PC-9 (cell line): ENCODE measurements at regions of chr2 and their contacts with region 1.

Region 1: GRCh38 chr2:172465417-172466334 is 38.3 kb downstream of the ITGA6 start:
- DNase-seq: peak; percentile 78 to 91
- H3K4me3 ChIP-seq: no peak overlapping the region
- H3K27ac ChIP-seq: peak overlapping the region; percentile 61
- H3K4me1 ChIP-seq: peaks cover 49% of the 10 kb centered on the region
- H3K27me3 ChIP-seq: no peaks in the 10 kb centered on the region
- CTCF ChIP-seq: peak; percentile 100

Region 2: DNA sequence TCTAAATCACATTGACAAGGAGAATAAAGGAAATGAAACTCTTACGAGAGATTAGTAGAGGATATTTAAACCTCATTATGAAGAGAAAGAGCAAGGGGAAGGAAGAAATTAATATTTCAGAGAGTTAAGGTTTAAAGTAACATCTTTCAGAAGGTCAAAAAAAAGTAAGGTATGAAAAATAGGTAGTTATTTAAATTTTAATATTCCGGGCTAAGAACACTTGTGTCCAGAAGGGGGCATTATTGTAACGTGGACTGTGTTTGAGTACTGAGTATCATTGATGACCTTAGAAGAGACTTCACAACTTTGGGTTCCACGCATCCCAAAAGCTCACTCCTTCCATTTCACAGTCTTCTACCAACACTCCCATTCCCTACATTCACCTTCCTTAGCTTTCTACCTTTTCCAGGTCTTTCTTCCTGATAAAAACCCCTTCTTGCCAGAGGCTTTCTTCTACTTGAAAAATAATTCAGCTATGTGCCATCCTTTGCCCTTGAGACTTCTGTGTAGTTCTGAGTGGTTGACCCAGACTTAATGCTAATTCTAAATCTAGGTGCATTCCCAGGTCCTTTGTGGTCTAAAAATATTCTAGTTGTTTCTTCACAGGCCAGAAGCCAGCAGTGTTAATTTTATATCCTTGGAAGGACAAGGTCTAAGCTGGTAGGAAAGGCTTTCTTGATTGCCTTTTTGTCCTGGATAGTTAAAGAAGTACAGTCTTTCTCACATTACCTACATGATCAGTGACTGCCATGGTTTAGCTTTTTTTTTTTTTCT is 761.9 kb before region 1 on chr2:
- CTCF ChIA-PET with region 1: interaction called, 9 read pairs
- POLR2A ChIA-PET with region 1: no interaction called
- intact Hi-C with region 1: loop called (anchors 1 kb)
- DNase-seq: peak; percentile 10 to 59
- H3K4me3 ChIP-seq: no peak overlapping the region
- H3K27ac ChIP-seq: peak overlapping the region; percentile 18; the same call in 1 of the 2 replicates
- H3K4me1 ChIP-seq: no peaks in the 10 kb centered on the region
- H3K27me3 ChIP-seq: no peaks in the 10 kb centered on the region
- CTCF ChIP-seq: peak; percentile 85

Region 3: GRCh38 chr2:171999604-172000469 is 465.8 kb before region 1 on chr2 and contains the start of gene METAP1D:
- CTCF ChIA-PET with region 1: no interaction called
- POLR2A ChIA-PET with region 1: no interaction called
- intact Hi-C with region 1: loop called (anchors 1 kb)
- DNase-seq: peak; percentile 91 to 100
- H3K4me3 ChIP-seq: peak within 1 kb of the TSS; percentile 65
- H3K27ac ChIP-seq: peak within 1 kb of the TSS; percentile 77
- H3K4me1 ChIP-seq: peaks cover 17% of the 10 kb centered on the region
- H3K27me3 ChIP-seq: no peaks in the 10 kb centered on the region
- CTCF ChIP-seq: no peak; the same call in 1 of the 2 replicates
- total RNA-seq, gene METAP1D: 21.5 and 32.4 TPM in 2 replicates

Region 4: GRCh38 chr2:172226244-172227061 is 239.2 kb before region 1 on chr2:
- CTCF ChIA-PET with region 1: interaction called, 58 read pairs
- POLR2A ChIA-PET with region 1: interaction called, 4 read pairs
- intact Hi-C with region 1: loop called (anchors 1 kb)
- DNase-seq: peak; percentile 81 to 88
- H3K4me3 ChIP-seq: no peak overlapping the region
- H3K27ac ChIP-seq: no peak overlapping the region
- H3K4me1 ChIP-seq: peaks cover 60% of the 10 kb centered on the region
- H3K27me3 ChIP-seq: no peaks in the 10 kb centered on the region
- CTCF ChIP-seq: peak; percentile 82

Region 5: DNA sequence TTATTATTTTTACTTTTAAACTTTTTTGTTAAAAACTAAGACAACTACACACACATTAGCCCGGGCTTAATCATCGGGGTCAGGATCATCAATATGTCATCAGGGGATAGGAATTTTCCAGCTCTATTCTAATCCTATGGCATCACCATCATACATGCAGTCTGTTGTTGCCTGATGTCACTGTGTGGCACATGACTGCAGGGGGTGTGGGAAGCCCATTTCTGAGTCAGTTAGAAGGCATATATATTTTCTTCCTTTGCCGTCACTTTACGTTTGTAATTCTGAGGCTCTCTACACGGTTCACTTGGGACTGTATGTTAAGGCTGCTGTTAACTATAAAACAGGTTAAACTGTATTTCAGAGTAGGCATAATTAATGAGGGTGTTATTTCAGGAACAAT is 182.7 kb before region 1 on chr2:
- CTCF ChIA-PET with region 1: interaction called, 13 read pairs
- POLR2A ChIA-PET with region 1: no interaction called
- intact Hi-C with region 1: no loop called
- DNase-seq: no peak
- H3K4me3 ChIP-seq: no peak overlapping the region
- H3K27ac ChIP-seq: no peak overlapping the region
- H3K4me1 ChIP-seq: peaks cover 12% of the 10 kb centered on the region
- H3K27me3 ChIP-seq: no peaks in the 10 kb centered on the region
- CTCF ChIP-seq: no peak

Region 6: GRCh38 chr2:172329774-172330671 is 135.7 kb before region 1 on chr2:
- CTCF ChIA-PET with region 1: no interaction called
- POLR2A ChIA-PET with region 1: no interaction called
- intact Hi-C with region 1: no loop called
- DNase-seq: no peak
- H3K4me3 ChIP-seq: no peak overlapping the region
- H3K27ac ChIP-seq: no peak overlapping the region
- H3K4me1 ChIP-seq: 0 out of 2 replicates have a peak, but pooled peaks cover 5% of the 10 kb centered on the region
- H3K27me3 ChIP-seq: no peaks in the 10 kb centered on the region
- CTCF ChIP-seq: no peak

Region 7: DNA sequence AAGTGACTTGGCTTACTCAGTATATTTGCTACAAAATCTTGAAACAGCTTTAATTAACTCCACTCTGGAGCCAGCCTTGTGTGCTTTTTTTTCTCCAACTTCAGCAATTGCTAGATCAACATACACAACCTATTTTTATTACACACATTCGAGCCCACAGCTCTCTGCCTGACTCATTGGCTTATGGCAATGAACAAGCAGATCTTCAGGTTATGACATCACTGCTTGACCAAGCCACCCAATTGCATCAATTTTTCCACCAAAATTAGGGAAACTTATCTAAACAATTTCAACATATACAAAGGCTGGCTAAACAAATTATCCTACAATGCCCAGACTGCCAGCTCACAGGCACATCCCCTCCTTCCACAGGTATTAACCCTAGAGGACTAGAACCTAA is 50.6 kb after region 1 on chr2:
- CTCF ChIA-PET with region 1: no interaction called
- POLR2A ChIA-PET with region 1: no interaction called
- intact Hi-C with region 1: no loop called
- DNase-seq: peak in 1 of 2 experiments; percentile 56
- H3K4me3 ChIP-seq: no peak overlapping the region
- H3K27ac ChIP-seq: no peak overlapping the region
- H3K4me1 ChIP-seq: peaks cover 8% of the 10 kb centered on the region
- H3K27me3 ChIP-seq: no peaks in the 10 kb centered on the region
- CTCF ChIP-seq: no peak

Region 8: GRCh38 chr2:172674034-172674967 is 208.6 kb after region 1 on chr2:
- CTCF ChIA-PET with region 1: interaction called, 10 read pairs
- POLR2A ChIA-PET with region 1: no interaction called
- intact Hi-C with region 1: no loop called
- DNase-seq: peak in 1 of 2 experiments; percentile 29
- H3K4me3 ChIP-seq: no peak overlapping the region
- H3K27ac ChIP-seq: no peak overlapping the region
- H3K4me1 ChIP-seq: peaks cover 28% of the 10 kb centered on the region
- H3K27me3 ChIP-seq: no peaks in the 10 kb centered on the region
- CTCF ChIP-seq: no peak; the same call in 1 of the 2 replicates